Calu3 (cell line): ENCODE measurements at regions of chr22 and their contacts with region 1.

Region 1: GRCh38 chr22:25777870-25778269 is 35.9 kb downstream of the MYO18B start:
- DNase-seq: peak; percentile 46
- H3K4me3 Mint-ChIP-seq: no peak overlapping the region
- H3K27ac Mint-ChIP-seq: no peak overlapping the region
- H3K4me1 Mint-ChIP-seq: no peaks in the 10 kb centered on the region
- H3K27me3 Mint-ChIP-seq: peaks cover 67% of the 10 kb centered on the region
- CTCF ChIP-seq: peak; percentile 27

Region 2: DNA sequence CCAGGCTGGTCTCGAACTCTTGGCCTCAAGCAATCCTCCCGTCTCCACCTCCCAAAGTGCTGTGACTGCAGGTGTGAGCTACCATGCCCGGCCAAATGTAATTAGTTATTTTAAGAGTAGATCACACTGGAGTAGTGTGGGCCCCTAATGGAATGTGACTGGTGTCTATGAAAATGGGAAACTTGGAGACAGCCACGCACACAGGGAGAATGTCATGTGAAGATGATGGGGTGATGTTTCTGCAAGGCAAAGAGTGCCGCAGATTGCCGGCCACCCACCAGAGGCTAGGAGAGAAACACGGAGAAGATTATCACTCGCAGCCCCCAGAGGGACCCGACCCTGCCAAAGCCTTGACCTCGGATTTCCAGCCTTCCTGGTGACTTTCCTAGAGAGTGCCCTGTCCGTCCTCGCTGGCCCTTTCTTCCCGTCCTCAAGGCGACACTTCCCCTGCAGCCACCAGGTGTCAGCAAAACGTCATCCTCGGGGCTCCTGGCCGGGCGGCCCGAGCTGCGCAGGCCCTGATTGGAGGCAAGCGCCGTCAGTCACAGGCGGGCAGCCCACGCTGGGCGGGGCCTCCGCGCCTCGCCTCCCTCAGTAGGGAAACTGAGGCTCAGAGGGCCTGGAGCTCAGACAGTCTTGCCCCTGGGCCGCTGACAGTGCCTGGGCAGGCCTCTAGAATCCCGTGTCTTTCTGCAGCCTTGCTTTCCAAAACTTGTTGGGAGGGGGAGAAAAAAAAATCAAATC is 542.2 kb before region 1 on chr22:
- CTCF ChIA-PET with region 1: no interaction called
- intact Hi-C with region 1: loop called (anchors 2 kb)
- DNase-seq: peak; percentile 95
- H3K4me3 Mint-ChIP-seq: peak overlapping the region; percentile 58
- H3K27ac Mint-ChIP-seq: peak overlapping the region; percentile 69
- H3K4me1 Mint-ChIP-seq: no peaks in the 10 kb centered on the region
- H3K27me3 Mint-ChIP-seq: peaks cover 69% of the 10 kb centered on the region
- CTCF ChIP-seq: peak; percentile 91

Region 3: GRCh38 chr22:25465949-25466348 is 311.9 kb before region 1 on chr22:
- CTCF ChIA-PET with region 1: interaction called, 13 read pairs
- intact Hi-C with region 1: loop called (anchors 1 kb)
- DNase-seq: no peak
- H3K4me3 Mint-ChIP-seq: no peak overlapping the region
- H3K27ac Mint-ChIP-seq: no peak overlapping the region
- H3K4me1 Mint-ChIP-seq: no peaks in the 10 kb centered on the region
- H3K27me3 Mint-ChIP-seq: no peaks in the 10 kb centered on the region
- CTCF ChIP-seq: no peak

Region 4: DNA sequence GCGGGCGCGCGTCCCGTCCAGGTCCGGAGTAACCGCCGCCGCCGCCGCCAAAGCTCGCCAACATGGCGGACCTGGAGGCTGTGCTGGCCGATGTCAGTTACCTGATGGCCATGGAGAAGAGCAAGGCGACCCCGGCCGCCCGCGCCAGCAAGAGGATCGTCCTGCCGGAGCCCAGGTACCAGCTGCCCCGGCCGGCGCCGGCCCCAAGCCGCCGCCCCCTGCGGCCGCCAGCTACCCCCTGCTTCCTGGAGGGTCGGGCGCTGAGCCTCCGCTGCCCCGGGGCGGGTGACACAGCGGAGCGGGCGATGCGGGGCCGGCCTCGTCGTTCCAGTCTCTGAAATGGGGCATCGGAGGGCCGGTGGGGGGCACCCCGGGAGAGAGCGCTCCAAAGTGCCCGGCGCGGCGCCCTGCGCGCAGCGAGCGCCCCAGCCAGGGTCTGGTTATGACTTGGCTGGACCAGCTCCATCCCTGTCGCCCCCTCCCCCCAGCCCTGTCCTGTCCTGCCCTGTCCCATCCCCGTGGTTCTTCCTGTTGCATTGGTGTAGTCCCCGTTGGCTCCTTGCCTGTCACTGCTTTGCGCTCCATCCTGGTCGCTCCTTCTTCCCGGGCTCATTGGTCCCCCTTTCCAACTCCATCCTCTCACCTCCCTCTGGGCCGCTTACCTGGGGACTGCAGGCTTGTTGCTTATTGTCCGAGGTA is 212.7 kb before region 1 on chr22:
- CTCF ChIA-PET with region 1: interaction called, 3 read pairs
- intact Hi-C with region 1: loop called (anchors 5 kb)
- DNase-seq: peak; percentile 39
- H3K4me3 Mint-ChIP-seq: peak overlapping the region; percentile 89
- H3K27ac Mint-ChIP-seq: peak overlapping the region; percentile 85
- H3K4me1 Mint-ChIP-seq: peaks cover 24% of the 10 kb centered on the region
- H3K27me3 Mint-ChIP-seq: peaks cover 37% of the 10 kb centered on the region
- CTCF ChIP-seq: no peak

Region 5: GRCh38 chr22:25669253-25670069 is 108.4 kb before region 1 on chr22:
- CTCF ChIA-PET with region 1: no interaction called
- intact Hi-C with region 1: no loop called
- DNase-seq: no peak
- H3K4me3 Mint-ChIP-seq: no peak overlapping the region
- H3K27ac Mint-ChIP-seq: no peak overlapping the region
- H3K4me1 Mint-ChIP-seq: no peaks in the 10 kb centered on the region
- H3K27me3 Mint-ChIP-seq: no peaks in the 10 kb centered on the region
- CTCF ChIP-seq: no peak

Region 6: DNA sequence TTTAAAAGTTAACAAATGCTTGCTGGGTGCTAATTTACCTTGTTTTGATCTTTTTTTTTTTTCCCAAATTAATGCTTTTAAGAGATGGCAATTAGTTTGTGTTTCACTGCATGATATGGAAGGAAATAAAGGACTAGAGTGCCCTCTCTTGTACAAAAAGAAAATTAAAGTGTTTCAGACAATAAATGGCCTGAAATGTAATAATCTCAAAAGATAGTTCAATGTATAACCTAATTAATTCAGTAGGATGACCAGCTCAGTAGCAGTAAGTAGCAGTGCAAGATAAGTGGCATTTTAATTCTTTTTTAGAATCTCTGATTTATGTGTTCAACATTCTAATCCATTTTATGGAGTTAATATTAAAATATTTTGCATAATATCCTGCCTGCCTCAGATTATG is 75.8 kb before region 1 on chr22:
- CTCF ChIA-PET with region 1: no interaction called
- intact Hi-C with region 1: loop called (anchors 5 kb)
- DNase-seq: no peak
- H3K4me3 Mint-ChIP-seq: no peak overlapping the region
- H3K27ac Mint-ChIP-seq: no peak overlapping the region
- H3K4me1 Mint-ChIP-seq: no peaks in the 10 kb centered on the region
- H3K27me3 Mint-ChIP-seq: no peaks in the 10 kb centered on the region
- CTCF ChIP-seq: no peak

Region 7: GRCh38 chr22:25942856-25943411 is 165.1 kb after region 1 on chr22:
- CTCF ChIA-PET with region 1: no interaction called
- intact Hi-C with region 1: no loop called
- DNase-seq: no peak
- H3K4me3 Mint-ChIP-seq: no peak overlapping the region
- H3K27ac Mint-ChIP-seq: no peak overlapping the region
- H3K4me1 Mint-ChIP-seq: no peaks in the 10 kb centered on the region
- H3K27me3 Mint-ChIP-seq: peaks cover 81% of the 10 kb centered on the region
- CTCF ChIP-seq: no peak

Region 8: DNA sequence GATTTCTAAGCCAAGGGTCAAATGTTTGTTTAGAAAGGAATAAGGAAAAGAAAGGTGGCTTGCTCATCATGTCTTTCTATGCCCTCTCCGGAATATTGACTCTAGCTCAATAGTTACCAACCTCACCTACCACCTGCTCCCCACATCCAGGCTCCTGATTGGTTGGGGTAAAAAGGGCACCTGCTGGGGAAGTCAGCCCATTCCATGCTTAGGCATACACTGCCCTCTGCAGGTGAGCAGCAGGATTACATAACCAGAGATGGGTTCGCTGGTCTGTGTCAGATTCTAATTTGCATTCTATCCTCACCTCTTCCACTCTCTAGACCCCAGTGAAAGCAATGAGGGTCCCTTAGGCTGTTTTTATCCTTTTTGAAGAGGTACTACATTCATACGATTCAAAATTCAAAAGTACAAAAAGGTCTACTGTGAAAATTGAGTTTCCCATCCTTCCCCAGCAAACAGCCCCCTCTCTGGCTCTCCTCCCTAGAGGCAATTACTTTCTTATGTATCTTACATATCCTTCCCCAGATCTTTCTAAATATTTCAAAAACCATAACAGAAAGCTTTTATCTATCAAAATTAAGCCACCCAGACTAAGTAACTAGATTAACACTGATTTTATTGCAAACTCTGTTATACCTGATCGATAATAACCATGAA is 553.2 kb after region 1 on chr22:
- CTCF ChIA-PET with region 1: interaction called, 3 read pairs
- intact Hi-C with region 1: loop called (anchors 2 kb)
- DNase-seq: peak; percentile 81
- H3K4me3 Mint-ChIP-seq: no peak overlapping the region
- H3K27ac Mint-ChIP-seq: no peak overlapping the region
- H3K4me1 Mint-ChIP-seq: peaks cover 9% of the 10 kb centered on the region
- H3K27me3 Mint-ChIP-seq: peaks cover 88% of the 10 kb centered on the region
- CTCF ChIP-seq: peak; percentile 91